AG04450 (cell line): ENCODE measurements at regions of chr2 and their contacts with region 1.

Region 1: GRCh38 chr2:120977582-120978358 is 242.1 kb downstream of the GLI2 start:
- DNase-seq: no peak
- H3K4me3 ChIP-seq: no peak overlapping the region
- H3K27ac ChIP-seq: no peak overlapping the region
- H3K27me3 ChIP-seq: no peaks in the 10 kb centered on the region
- CTCF ChIP-seq: no peak

Region 2: DNA sequence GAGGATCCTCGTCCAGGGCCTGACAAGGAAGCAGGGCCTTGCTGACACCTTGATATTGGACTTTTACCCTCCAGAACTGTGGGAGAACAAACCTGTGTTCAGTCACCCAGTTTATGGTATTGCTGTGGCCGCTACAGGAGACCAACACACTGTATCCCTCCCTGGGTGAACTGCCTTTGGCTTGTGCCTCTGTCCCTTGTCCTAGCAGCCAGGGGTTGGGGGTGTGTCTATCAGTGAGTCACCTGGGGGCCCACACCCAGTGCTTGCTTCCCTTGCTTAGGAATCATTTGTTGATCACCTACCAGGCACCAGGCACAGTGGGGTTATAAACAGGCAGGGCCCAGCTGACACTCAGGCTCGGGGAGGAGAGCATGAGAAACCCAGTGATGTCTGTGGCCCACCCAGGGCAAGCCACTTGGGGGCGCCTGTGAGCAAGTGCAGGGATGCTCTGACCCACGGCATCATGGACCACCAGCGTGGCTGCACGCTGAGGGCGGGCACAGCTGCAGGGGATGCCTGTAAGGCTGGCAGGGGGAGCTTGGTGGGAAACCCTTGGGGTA is 771.7 kb before region 1 on chr2:
- CTCF ChIA-PET with region 1: no interaction called
- POLR2A ChIA-PET with region 1: no interaction called
- DNase-seq: no peak
- H3K4me3 ChIP-seq: no peak overlapping the region
- H3K27ac ChIP-seq: no peak overlapping the region
- H3K27me3 ChIP-seq: peaks cover 4% of the 10 kb centered on the region
- CTCF ChIP-seq: peak; percentile 35; the same call in 1 of the 2 replicates

Region 3: GRCh38 chr2:120955427-120955826 is 22.3 kb before region 1 on chr2:
- CTCF ChIA-PET with region 1: interaction called, 10 read pairs
- POLR2A ChIA-PET with region 1: no interaction called
- DNase-seq: no peak
- H3K4me3 ChIP-seq: no peak overlapping the region
- H3K27ac ChIP-seq: no peak overlapping the region
- H3K27me3 ChIP-seq: no peaks in the 10 kb centered on the region
- CTCF ChIP-seq: no peak